Panc1 (cell line): ENCODE measurements at regions of chr7 and their contacts with region 1.

Region 1: DNA sequence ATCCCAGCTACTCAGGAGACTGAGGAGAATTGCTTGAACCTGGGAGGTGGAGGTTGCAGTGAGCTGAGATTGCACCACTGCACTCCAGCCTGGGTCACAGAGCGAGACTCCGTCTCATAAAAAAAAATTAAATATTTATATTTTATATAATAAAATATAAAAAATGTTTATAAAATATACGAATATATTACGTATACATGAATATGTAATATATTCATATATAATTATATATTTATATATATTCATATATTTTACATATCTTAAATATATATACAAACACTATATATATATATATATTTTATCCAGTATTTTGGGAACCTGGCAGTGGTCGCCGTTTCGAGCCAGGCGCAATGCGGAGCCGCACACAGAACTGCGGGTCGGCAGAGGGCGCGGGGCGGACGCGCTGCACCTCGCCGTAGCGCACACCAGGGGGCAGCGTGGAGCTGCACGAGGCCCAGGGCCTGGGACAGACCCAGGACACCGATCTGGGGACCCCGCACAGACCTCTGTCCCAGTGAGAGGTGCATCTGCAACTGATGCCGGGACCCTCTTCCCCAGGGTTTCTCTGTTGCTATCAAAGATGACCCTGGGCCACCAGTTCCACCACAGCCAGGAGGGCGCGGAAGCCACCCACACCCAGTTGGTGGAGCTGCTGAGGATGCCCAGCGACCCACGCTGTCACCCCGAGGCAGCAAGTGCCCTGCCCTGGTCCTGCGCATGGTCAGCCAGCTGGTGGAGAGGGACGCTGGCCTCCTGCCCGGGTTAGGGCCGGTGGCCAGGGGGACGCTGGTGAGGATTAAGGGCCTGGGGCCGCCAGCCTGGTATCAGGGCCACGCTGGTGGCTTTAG is 22.7 kb downstream of the AP5Z1 start:
- DNase-seq: peak; percentile 38
- ATAC-seq: peak; percentile 79
- H3K4me3 ChIP-seq: no peak overlapping the region; a peak in 1 of 4 replicates
- H3K27ac ChIP-seq: no peak overlapping the region
- H3K4me1 ChIP-seq: peaks cover 7% of the 10 kb centered on the region; the same call in 1 of the 2 replicates
- H3K27me3 ChIP-seq: no peaks in the 10 kb centered on the region
- CTCF ChIP-seq: peak; percentile 98

Region 2: GRCh38 chr7:4687956-4688355 is 110.1 kb before region 1 on chr7:
- CTCF ChIA-PET with region 1: no interaction called
- POLR2A ChIA-PET with region 1: interaction called, 14 read pairs
- in situ Hi-C with region 1: no loop called
- intact Hi-C with region 1: no loop called
- DNase-seq: no peak
- ATAC-seq: no peak
- H3K4me3 ChIP-seq: no peak overlapping the region
- H3K27ac ChIP-seq: no peak overlapping the region
- H3K4me1 ChIP-seq: peaks cover 31% of the 10 kb centered on the region
- H3K27me3 ChIP-seq: no peaks in the 10 kb centered on the region
- CTCF ChIP-seq: no peak

Region 3: DNA sequence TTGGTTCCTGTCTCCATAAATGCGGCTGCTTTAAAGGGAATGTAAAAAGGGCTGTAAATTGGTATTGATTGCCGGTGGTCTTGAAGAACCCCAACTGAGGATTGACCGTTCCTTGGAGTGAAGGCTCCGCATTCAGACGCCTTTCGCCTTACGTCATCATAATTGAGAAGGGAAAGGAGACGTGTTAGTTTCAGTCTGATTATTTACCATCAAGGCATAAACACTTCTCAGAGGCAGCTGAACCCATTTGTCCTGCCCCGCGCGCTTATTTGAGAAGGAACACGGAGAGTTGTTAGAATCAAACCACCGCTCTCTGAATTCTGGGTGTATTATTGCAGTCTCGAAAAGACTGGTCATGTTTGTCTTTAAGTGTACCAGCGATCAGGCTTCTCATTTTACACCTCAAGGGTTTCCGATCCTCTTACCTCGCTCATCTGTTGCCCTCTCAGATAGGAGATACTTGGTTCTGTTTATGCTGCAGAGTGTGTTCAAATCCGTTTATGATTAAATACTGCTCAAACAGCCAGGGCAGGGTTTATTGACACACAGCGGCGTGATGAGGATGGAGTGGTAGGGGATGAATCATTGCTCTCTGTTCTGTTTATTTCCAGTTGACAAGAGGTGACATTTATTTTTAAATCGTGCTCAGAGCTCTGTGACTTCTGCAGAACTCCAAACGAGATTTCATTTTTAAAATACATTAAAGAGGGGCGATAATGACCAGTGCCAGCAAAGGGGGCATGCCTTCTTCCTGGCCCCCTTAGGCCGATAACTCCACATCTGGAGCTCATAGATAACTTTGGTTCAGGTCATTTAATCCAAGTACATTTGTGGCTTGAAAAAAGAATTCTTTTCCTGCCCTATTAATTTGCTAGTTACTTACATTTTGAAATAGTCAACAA is 85.5 kb before region 1 on chr7:
- CTCF ChIA-PET with region 1: no interaction called
- POLR2A ChIA-PET with region 1: no interaction called
- in situ Hi-C with region 1: no loop called
- intact Hi-C with region 1: no loop called
- DNase-seq: peak; percentile 60
- ATAC-seq: peak; percentile 63
- H3K4me3 ChIP-seq: no peak overlapping the region
- H3K27ac ChIP-seq: 0 out of 2 replicates have a peak overlapping the region, but pooled peaks have one; percentile 7
- H3K4me1 ChIP-seq: peaks cover 11% of the 10 kb centered on the region
- H3K27me3 ChIP-seq: no peaks in the 10 kb centered on the region
- CTCF ChIP-seq: no peak

Region 4: GRCh38 chr7:5083311-5083711 is 285.2 kb after region 1 on chr7:
- CTCF ChIA-PET with region 1: interaction called, 7 read pairs
- POLR2A ChIA-PET with region 1: no interaction called
- in situ Hi-C with region 1: no loop called
- intact Hi-C with region 1: loop called (anchors 2 kb)
- DNase-seq: no peak
- ATAC-seq: no peak
- H3K4me3 ChIP-seq: no peak overlapping the region
- H3K27ac ChIP-seq: no peak overlapping the region
- H3K4me1 ChIP-seq: no peaks in the 10 kb centered on the region
- H3K27me3 ChIP-seq: peaks cover 3% of the 10 kb centered on the region; the same call in 1 of the 2 replicates
- CTCF ChIP-seq: no peak